Caco-2 (cell line): ENCODE measurements at regions of chr7 and their contacts with region 1.

Region 1: GRCh38 chr7:51162724-51163329 is 153.8 kb downstream of the COBL start:
- DNase-seq: peak; percentile 84 to 89
- H3K4me3 ChIP-seq: no peak overlapping the region
- H3K4me3 Mint-ChIP-seq: no peak overlapping the region
- H3K27ac Mint-ChIP-seq: no peak overlapping the region
- H3K4me1 ChIP-seq: peaks cover 4% of the 10 kb centered on the region
- H3K4me1 Mint-ChIP-seq: peaks cover 19% of the 10 kb centered on the region
- H3K27me3 ChIP-seq: no peaks in the 10 kb centered on the region
- H3K27me3 Mint-ChIP-seq: no peaks in the 10 kb centered on the region
- CTCF ChIP-seq: peak; percentile 86 to 91

Region 2: DNA sequence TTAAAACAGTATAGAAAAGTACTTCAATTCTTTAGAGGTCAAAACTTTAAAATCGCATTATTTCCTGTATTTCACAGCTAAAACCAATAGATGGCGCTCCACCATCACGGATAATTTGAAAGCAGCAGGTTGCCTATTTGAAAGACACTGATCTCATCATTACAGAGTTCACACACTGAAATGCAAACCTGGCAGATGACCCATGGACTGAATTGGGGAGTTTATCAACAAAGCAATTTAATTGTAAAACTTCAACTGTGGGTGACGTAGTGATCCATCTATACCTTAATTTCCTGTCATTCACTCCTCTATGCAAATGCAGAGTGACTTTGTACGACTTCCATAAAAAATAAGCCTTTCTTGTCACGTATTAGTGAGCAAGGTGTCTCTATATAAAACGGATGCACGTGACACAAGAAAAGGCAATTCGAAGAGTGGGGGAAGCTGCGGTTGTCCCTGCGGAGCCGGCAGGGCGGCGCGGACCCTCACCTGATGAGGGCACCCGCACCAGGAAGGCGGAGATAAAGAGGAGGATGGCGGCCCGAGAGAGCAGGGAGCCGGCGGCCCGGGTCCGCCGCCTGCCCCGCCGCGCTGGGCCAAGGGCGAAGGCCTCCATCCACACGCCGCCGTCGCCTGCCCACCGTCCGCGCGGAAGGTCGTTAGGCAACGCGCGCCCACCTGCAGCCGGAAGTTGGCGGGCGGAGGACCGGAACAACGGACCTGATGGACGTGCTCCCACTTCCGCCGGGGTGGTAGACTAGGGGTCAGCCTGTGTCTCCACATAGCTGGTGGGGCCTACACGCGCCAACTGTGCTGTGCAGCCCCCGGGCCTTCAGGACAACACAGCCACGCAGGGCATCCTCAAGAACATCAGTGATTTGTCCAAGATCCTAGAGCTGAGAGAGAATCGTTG is 1070.0 kb before region 1 on chr7 and contains the start of gene ZPBP:
- CTCF ChIA-PET with region 1: interaction called, 8 read pairs
- POLR2A ChIA-PET with region 1: no interaction called
- intact Hi-C with region 1: loop called (anchors 1 kb)
- DNase-seq: peak in 1 of 2 experiments; percentile 40
- H3K4me3 ChIP-seq: no peak within 1 kb of the TSS
- H3K4me3 Mint-ChIP-seq: no peak within 1 kb of the TSS
- H3K27ac Mint-ChIP-seq: no peak within 1 kb of the TSS
- H3K4me1 ChIP-seq: no peaks in the 10 kb centered on the region
- H3K4me1 Mint-ChIP-seq: no peaks in the 10 kb centered on the region
- H3K27me3 ChIP-seq: no peaks in the 10 kb centered on the region
- H3K27me3 Mint-ChIP-seq: peaks cover 3% of the 10 kb centered on the region
- CTCF ChIP-seq: peak; percentile 54 to 74
- total RNA-seq, gene ZPBP: not detected in 2 replicates

Region 3: GRCh38 chr7:50696810-50697582 is 465.8 kb before region 1 on chr7:
- CTCF ChIA-PET with region 1: interaction called, 3 read pairs
- POLR2A ChIA-PET with region 1: no interaction called
- intact Hi-C with region 1: loop called (anchors 1 kb)
- DNase-seq: peak in 1 of 2 experiments; percentile 31
- H3K4me3 ChIP-seq: no peak overlapping the region
- H3K4me3 Mint-ChIP-seq: no peak overlapping the region
- H3K27ac Mint-ChIP-seq: peak overlapping the region; percentile 8
- H3K4me1 ChIP-seq: no peaks in the 10 kb centered on the region
- H3K4me1 Mint-ChIP-seq: peaks cover 7% of the 10 kb centered on the region
- H3K27me3 ChIP-seq: no peaks in the 10 kb centered on the region
- H3K27me3 Mint-ChIP-seq: no peaks in the 10 kb centered on the region
- CTCF ChIP-seq: peak; percentile 49 to 59

Region 4: DNA sequence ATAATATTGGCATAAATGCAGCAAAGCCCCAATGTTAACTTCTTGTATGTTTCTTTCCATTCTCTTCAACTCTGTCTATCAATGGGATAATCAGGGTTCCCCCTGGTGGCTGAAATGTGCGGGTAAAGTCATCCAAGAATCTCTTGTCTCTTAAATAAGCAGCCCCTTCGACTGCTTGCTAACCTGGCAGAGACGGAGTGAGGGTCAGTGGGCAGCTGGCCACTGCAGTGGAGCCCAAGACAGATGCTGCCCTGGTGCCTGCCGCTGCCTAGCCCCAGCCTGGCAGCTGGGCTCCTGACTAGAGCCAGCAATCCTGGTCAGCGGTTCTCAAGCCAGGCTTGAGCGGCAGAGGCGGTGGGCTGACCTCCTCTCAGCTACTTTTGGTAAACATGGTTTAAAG is 95.1 kb before region 1 on chr7:
- CTCF ChIA-PET with region 1: interaction called, 4 read pairs
- POLR2A ChIA-PET with region 1: no interaction called
- intact Hi-C with region 1: loop called (anchors 2 kb)
- DNase-seq: peak; percentile 68 to 73
- H3K4me3 ChIP-seq: no peak overlapping the region
- H3K4me3 Mint-ChIP-seq: no peak overlapping the region
- H3K27ac Mint-ChIP-seq: no peak overlapping the region
- H3K4me1 ChIP-seq: peaks cover 16% of the 10 kb centered on the region
- H3K4me1 Mint-ChIP-seq: peaks cover 17% of the 10 kb centered on the region
- H3K27me3 ChIP-seq: no peaks in the 10 kb centered on the region
- H3K27me3 Mint-ChIP-seq: no peaks in the 10 kb centered on the region
- CTCF ChIP-seq: peak; percentile 70 to 76

Region 5: DNA sequence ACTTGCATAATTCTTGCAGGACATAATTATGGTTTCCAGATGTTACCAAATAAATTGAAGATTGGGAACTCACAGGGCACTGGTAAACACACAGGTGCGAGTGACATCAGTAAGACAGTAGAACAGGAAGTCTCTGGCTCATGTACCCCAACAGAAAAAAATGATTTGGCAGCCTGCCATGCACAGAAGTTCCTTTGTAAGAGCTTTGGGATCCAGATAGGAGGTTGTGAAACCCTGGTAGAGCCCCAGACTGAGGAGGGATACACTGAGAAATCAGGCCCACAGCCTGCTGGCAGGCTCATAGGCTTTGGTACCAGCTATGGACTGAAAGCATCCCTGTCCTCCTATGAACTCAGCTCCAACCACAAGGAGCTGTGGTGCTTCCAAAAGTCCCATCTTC is 35.8 kb after region 1 on chr7:
- CTCF ChIA-PET with region 1: no interaction called
- POLR2A ChIA-PET with region 1: no interaction called
- intact Hi-C with region 1: no loop called
- DNase-seq: no peak
- H3K4me3 ChIP-seq: no peak overlapping the region
- H3K4me3 Mint-ChIP-seq: no peak overlapping the region
- H3K27ac Mint-ChIP-seq: no peak overlapping the region
- H3K4me1 ChIP-seq: no peaks in the 10 kb centered on the region
- H3K4me1 Mint-ChIP-seq: no peaks in the 10 kb centered on the region
- H3K27me3 ChIP-seq: no peaks in the 10 kb centered on the region
- H3K27me3 Mint-ChIP-seq: no peaks in the 10 kb centered on the region
- CTCF ChIP-seq: no peak

Region 6: GRCh38 chr7:51315393-51316261 is 152.8 kb after region 1 on chr7:
- CTCF ChIA-PET with region 1: interaction called, 6 read pairs
- POLR2A ChIA-PET with region 1: no interaction called
- intact Hi-C with region 1: loop called (anchors 2 kb)
- DNase-seq: peak; percentile 89 to 91
- H3K4me3 ChIP-seq: peak overlapping the region; percentile 93
- H3K4me3 Mint-ChIP-seq: peak overlapping the region; percentile 93
- H3K27ac Mint-ChIP-seq: peak overlapping the region; percentile 96
- H3K4me1 ChIP-seq: peaks cover 64% of the 10 kb centered on the region
- H3K4me1 Mint-ChIP-seq: peaks cover 47% of the 10 kb centered on the region
- H3K27me3 ChIP-seq: no peaks in the 10 kb centered on the region
- H3K27me3 Mint-ChIP-seq: no peaks in the 10 kb centered on the region
- CTCF ChIP-seq: no peak

Region 7: DNA sequence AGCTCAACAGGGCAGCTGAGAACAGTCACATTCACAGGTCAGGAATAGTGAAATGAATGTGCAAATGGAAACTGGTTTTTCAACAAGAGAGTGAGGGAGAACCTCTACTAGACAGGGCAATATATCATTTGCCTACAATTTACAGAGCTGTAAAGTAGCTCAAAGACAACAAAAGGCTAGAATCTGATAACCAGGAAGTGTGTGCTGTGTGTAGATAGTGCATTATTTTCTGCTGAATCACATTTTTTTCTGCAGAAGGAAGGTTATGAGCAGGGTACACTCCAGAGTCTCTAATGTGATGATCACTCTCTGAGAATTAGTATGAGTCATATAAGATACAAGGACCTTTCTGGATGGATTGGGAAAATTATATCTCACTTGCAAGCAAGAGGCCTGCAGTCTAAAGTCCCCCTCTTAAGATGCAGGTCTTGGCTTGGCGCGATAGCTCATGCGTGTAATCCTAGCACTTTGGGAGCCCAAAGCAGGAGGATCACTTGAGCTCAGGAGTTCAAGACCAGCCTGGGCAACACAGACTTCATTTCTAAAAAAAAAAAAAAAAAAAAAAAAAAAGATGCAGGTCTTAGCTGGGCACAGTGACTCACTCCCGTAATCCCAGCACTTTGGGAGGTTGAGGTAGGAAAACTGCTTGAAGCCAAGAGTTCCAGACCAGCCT is 213.7 kb after region 1 on chr7:
- CTCF ChIA-PET with region 1: interaction called, 153 read pairs
- POLR2A ChIA-PET with region 1: no interaction called
- intact Hi-C with region 1: no loop called
- DNase-seq: peak; percentile 74 to 79
- H3K4me3 ChIP-seq: no peak overlapping the region
- H3K4me3 Mint-ChIP-seq: peak overlapping the region; percentile 22
- H3K27ac Mint-ChIP-seq: peak overlapping the region; percentile 66
- H3K4me1 ChIP-seq: peaks cover 18% of the 10 kb centered on the region
- H3K4me1 Mint-ChIP-seq: peaks cover 9% of the 10 kb centered on the region
- H3K27me3 ChIP-seq: no peaks in the 10 kb centered on the region
- H3K27me3 Mint-ChIP-seq: no peaks in the 10 kb centered on the region
- CTCF ChIP-seq: no peak